PC-9 (cell line): ENCODE measurements at regions of chr15 and their contacts with region 1.

Region 1: GRCh38 chr15:65887565-65887964 is 18.3 kb downstream of the RAB11A start:
- DNase-seq: no peak
- H3K4me3 ChIP-seq: no peak overlapping the region
- H3K27ac ChIP-seq: no peak overlapping the region
- H3K4me1 ChIP-seq: no peaks in the 10 kb centered on the region
- H3K27me3 ChIP-seq: no peaks in the 10 kb centered on the region
- CTCF ChIP-seq: no peak

Region 2: DNA sequence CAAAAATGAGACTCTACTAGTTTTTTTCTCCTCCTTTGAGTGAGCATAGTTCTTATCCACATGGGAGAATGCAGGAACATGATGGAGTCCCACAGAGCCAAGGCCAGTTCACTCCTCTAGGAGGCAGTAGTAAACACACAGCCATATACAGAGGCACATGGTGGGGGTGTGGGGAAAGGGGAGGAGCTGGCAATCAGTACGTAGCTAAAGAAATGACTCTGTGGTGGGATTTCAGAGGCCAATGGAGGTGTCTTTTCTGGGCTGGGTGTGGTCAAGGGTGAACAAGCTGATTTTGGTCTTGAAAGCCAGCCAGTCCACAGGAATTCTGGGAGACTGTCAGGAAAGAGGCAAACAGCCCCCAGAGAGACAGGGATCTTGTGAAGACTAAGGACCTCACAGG is 24.9 kb before region 1 on chr15:
- CTCF ChIA-PET with region 1: no interaction called
- POLR2A ChIA-PET with region 1: no interaction called
- intact Hi-C with region 1: no loop called
- DNase-seq: peak in 1 of 2 experiments; percentile 6
- H3K4me3 ChIP-seq: no peak overlapping the region
- H3K27ac ChIP-seq: no peak overlapping the region
- H3K4me1 ChIP-seq: no peaks in the 10 kb centered on the region
- H3K27me3 ChIP-seq: no peaks in the 10 kb centered on the region
- CTCF ChIP-seq: no peak; the same call in 1 of the 2 replicates

Region 3: DNA sequence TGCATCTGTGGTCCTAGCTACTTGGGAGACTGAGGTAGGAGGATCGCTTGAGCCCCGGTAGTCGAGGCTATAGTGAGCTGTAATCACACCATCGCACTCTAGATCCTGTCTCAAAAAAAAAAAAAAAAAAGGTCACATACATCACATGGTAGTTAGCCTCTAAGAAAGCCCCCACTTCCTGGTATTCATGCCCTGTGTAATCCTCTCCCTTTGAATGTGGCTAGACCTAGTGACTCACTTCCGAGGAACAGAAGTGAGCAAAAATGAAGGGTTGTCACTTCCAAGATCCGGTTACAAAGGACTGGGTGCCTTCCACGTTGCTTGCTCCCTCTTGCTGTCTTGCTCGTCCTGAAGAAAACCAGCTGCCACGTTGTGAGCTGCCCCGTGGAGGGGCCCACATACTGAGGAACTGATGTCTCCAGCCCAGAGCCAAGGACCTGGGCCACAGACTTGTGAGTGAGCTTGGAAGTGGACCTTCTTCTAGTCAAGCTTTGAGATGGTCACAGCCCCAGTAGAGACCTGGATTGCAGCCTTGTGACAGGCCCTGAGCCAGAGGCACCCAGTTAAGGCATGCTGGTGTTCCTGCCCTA is 690.8 kb after region 1 on chr15:
- CTCF ChIA-PET with region 1: interaction called, 10 read pairs
- POLR2A ChIA-PET with region 1: no interaction called
- intact Hi-C with region 1: no loop called
- DNase-seq: peak; percentile 9 to 46
- H3K4me3 ChIP-seq: no peak overlapping the region
- H3K27ac ChIP-seq: no peak overlapping the region
- H3K4me1 ChIP-seq: no peaks in the 10 kb centered on the region
- H3K27me3 ChIP-seq: no peaks in the 10 kb centered on the region
- CTCF ChIP-seq: no peak